ENCODE measurements at regions of chr7 and their contacts with region 1.

Region 1: DNA sequence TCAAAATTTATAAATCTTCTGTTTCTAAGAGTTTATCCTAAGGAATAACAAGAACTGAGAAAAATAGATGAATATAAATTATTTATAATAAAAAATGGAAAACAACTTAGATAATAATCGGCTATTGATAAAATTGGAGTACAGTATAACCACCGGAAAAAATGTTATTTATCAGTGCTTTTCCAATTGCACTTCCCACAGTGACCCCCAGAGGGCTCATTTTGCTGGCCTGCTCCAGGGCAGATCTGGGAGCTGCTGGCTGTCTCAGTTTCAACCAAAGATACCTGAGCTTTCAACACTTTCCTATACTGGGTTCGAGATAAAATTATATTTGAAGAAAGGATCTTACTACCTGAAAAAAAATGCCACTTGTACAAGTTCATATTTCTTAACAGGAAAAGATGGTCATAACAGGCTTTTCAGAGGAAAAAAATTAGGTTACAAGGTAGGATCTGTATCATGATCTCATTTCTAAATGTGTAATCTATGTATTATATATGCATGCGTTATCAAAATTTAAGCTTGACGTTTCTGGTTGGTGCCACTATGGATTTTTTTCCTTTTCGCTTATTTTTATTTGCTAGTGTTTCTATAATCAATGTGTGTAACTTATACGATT is 165.7 kb downstream of the NPSR1 start:
- DNase-seq: no peak
- H3K4me3 ChIP-seq: no peak overlapping the region
- H3K27ac ChIP-seq: no peak overlapping the region
- H3K4me1 ChIP-seq: no peaks in the 10 kb centered on the region
- H3K27me3 ChIP-seq: no peaks in the 10 kb centered on the region
- CTCF ChIP-seq: peak; percentile 14 to 56 (median 48)
- POLR2A ChIP-seq: no peak

Region 2: DNA sequence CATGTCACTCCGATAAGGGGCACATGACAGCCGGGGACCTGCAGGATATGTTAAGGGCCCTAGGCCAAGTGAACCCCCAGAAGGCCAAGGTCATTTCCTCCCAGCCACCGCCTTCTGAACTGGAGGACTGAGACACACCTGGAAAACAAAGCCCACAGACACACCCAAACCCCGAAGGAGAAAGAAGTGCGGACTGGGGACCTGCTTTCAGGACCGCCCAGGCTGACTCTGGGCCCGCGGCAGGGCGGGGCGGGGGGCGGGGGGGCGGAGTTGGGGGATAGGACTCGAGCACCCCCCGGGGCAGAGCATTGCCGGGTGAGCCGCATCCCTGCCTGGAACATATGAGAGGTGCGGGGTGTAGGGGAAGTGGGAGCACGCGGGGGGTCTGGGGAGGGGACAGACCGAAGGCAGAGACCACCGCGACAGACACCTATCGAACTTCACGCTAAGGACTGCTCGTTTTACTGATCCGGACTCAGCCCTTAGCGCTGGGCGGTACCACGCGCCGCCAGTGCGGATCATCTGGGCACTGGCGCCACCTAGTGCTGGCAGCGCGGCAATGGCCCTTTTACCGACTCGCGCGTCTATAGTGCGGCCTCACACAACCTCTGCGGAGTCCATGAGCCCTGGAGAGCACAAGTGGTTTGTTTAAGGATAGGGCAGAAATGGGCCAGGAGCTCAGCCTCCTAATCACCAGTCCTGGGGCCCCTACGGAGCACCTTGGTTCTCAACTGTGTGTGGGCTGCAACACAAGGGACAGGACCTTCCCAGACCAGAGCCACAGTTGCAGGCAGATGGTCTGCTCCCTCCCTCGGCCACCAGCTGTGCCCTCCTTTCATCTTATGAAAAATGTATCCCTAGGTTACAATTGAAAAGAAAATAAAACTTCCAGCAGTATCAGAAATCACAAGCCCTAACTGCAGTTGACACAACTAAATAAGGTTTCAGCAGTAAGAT is 713.6 kb after region 1 on chr7:
- intact Hi-C with region 1: loop called (anchors 10 kb)
- DNase-seq: no peak
- H3K4me3 ChIP-seq: peak overlapping the region; percentile 39 to 40
- H3K27ac ChIP-seq: no peak overlapping the region
- H3K4me1 ChIP-seq: peaks cover 7% of the 10 kb centered on the region
- H3K27me3 ChIP-seq: no peaks in the 10 kb centered on the region
- CTCF ChIP-seq: peak; percentile 79 to 86 (median 85)
- POLR2A ChIP-seq: no peak

Measured in vagina (tissue), 2 donors.